Right ventricle myocardium superior (tissue), 1 donor: ENCODE measurements at regions of chr22 and their contacts with region 1.

Region 1: DNA sequence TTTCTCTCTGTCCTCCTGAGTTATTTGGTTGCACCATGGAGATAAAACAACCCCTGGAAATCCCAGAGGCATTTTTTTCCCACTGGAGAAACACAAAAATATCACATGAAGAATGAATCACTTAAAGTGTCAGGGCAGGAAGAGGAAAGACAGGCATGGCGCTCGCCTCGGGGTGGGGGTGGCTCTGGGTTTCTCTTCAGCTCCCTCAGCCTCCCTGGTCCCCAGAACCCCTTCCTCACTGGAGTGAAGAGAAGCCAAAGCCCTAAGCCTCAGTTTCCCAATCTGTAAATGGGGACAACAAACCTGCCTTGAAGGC is 938 bp downstream of the SHISAL1 start:
- DNase-seq: peak; percentile 12
- ATAC-seq: no peak

Region 2: GRCh38 chr22:44242946-44243724 is 68.7 kb before region 1 on chr22:
- intact Hi-C with region 1: loop called (anchors 10 kb)
- DNase-seq: no peak
- ATAC-seq: no peak